PC-3 (cell line): ENCODE measurements at regions of chr2 and their contacts with region 1.

Region 1: GRCh38 chr2:165778653-165779451 is 15.2 kb downstream of the GALNT3 start:
- DNase-seq: peak; percentile 65
- ATAC-seq: peak; percentile 6
- H3K4me3 ChIP-seq: peak overlapping the region; percentile 2; the same call in 1 of the 2 replicates
- H3K27ac ChIP-seq: peak overlapping the region; percentile 78
- H3K4me1 ChIP-seq: peaks cover 37% of the 10 kb centered on the region
- H3K27me3 ChIP-seq: no peaks in the 10 kb centered on the region
- CTCF ChIP-seq: peak; percentile 63

Region 2: GRCh38 chr2:165401285-165401852 is 377.5 kb before region 1 on chr2:
- CTCF ChIA-PET with region 1: no interaction called
- POLR2A ChIA-PET with region 1: no interaction called
- intact Hi-C with region 1: loop called (anchors 1 kb)
- DNase-seq: peak; percentile 92
- ATAC-seq: peak; percentile 23
- H3K4me3 ChIP-seq: no peak overlapping the region
- H3K27ac ChIP-seq: no peak overlapping the region
- H3K4me1 ChIP-seq: peaks cover 23% of the 10 kb centered on the region
- H3K27me3 ChIP-seq: no peaks in the 10 kb centered on the region
- CTCF ChIP-seq: peak; percentile 97

Region 3: GRCh38 chr2:165499131-165499530 is 279.7 kb before region 1 on chr2:
- CTCF ChIA-PET with region 1: no interaction called
- POLR2A ChIA-PET with region 1: no interaction called
- intact Hi-C with region 1: no loop called
- DNase-seq: no peak
- ATAC-seq: no peak
- H3K4me3 ChIP-seq: no peak overlapping the region
- H3K27ac ChIP-seq: no peak overlapping the region
- H3K4me1 ChIP-seq: no peaks in the 10 kb centered on the region
- H3K27me3 ChIP-seq: no peaks in the 10 kb centered on the region
- CTCF ChIP-seq: no peak

Region 4: DNA sequence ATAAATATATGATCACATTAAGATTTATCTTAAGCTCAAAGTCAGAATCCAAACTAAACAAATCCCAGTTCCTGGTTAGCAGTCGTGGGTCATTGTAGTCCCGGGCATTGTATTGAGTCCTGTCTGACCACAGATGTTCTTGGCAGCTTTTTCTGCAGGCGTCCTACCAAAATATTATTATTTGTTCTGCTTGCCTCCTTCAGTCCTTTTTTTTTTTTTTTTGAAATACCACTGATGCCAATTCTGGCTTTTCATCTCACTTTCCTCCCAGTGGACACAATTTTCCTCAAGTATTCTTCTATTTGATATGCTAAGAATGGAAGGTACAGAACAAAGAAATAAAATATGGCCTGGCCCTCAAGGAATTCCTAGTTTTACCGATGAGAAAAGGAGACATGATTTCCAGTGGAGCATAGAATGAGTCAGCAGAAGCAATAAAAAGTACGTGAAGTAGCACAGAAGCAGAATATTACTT is 157.7 kb before region 1 on chr2:
- CTCF ChIA-PET with region 1: no interaction called
- POLR2A ChIA-PET with region 1: no interaction called
- intact Hi-C with region 1: loop called (anchors 5 kb)
- DNase-seq: peak; percentile 77
- ATAC-seq: peak; percentile 91
- H3K4me3 ChIP-seq: peak overlapping the region; percentile 22; the same call in 1 of the 2 replicates
- H3K27ac ChIP-seq: peak overlapping the region; percentile 48
- H3K4me1 ChIP-seq: peaks cover 14% of the 10 kb centered on the region
- H3K27me3 ChIP-seq: no peaks in the 10 kb centered on the region
- CTCF ChIP-seq: no peak

Region 5: GRCh38 chr2:165681841-165682240 is 97.0 kb before region 1 on chr2:
- CTCF ChIA-PET with region 1: no interaction called
- POLR2A ChIA-PET with region 1: no interaction called
- intact Hi-C with region 1: no loop called
- DNase-seq: no peak
- ATAC-seq: no peak
- H3K4me3 ChIP-seq: no peak overlapping the region
- H3K27ac ChIP-seq: no peak overlapping the region
- H3K4me1 ChIP-seq: no peaks in the 10 kb centered on the region
- H3K27me3 ChIP-seq: no peaks in the 10 kb centered on the region
- CTCF ChIP-seq: no peak

Region 6: DNA sequence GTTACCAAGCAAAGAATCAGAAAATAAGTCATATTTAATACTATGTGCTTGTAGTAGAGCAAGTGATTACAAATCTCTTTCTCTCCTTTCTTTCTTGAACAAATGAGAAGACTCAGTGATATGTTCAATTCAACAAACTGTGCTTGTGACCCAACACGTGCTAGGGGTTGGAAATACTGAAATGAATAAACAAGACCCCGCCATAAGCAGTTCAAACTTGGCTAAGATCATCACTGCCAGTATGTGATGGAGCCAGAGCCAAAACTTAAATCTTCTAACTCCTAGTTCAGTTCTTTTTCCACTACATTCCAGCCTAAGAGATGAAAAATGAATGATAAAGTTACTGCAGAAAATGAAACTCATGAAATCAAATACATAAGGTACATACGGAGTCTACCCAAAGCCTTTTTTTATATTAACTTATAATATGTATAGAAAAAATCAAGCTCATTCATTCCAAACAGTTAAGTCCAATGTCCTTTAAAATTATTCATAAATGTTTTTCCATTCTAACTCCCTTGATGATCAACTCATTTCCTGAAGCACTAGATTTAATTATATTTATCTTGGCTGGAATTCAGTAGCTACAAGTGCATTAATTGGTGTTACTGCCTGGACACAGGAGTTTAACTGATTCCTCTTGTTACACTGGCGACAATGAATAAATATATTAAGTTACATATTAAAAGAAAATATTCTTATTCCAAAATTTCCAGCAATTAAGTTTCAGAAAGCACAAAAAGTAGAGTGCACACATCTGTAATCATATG is 20.8 kb before region 1 on chr2:
- CTCF ChIA-PET with region 1: no interaction called
- POLR2A ChIA-PET with region 1: no interaction called
- intact Hi-C with region 1: loop called (anchors 1 kb)
- DNase-seq: peak; percentile 28
- ATAC-seq: peak; percentile 85
- H3K4me3 ChIP-seq: no peak overlapping the region
- H3K27ac ChIP-seq: no peak overlapping the region
- H3K4me1 ChIP-seq: no peaks in the 10 kb centered on the region
- H3K27me3 ChIP-seq: no peaks in the 10 kb centered on the region
- CTCF ChIP-seq: no peak

Region 7: DNA sequence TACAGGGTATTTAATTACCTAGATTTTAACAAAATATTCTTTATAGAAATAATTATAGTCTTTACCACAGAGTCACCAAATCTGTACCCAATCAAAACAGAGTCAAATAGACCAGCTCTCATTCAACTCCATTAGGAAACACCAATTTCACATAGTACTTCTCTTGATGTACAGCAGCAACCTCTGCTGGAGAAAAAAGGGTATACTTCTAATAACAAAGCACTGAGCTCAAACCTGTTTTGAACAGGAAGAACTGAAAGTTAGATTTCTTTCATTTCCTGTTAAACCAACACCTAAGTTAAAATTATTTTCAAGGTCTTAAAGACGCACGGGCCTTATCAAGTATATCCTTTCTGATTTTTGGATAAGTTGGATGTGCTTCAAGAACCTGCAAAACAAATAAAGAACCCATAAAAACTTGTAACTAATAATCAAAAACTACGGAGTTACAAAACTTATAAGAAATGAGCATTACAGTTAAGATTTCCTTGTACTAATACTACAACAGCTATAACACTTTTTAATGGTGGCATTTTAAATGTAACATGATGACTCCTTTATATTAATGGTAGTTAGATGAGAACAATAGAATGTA is 95.7 kb after region 1 on chr2:
- CTCF ChIA-PET with region 1: interaction called, 13 read pairs
- POLR2A ChIA-PET with region 1: no interaction called
- intact Hi-C with region 1: loop called (anchors 1 kb)
- DNase-seq: peak; percentile 93
- ATAC-seq: peak; percentile 94
- H3K4me3 ChIP-seq: peak overlapping the region; percentile 31
- H3K27ac ChIP-seq: no peak overlapping the region
- H3K4me1 ChIP-seq: peaks cover 10% of the 10 kb centered on the region
- H3K27me3 ChIP-seq: no peaks in the 10 kb centered on the region
- CTCF ChIP-seq: peak; percentile 96

Region 8: GRCh38 chr2:166246901-166247300 is 468.0 kb after region 1 on chr2:
- CTCF ChIA-PET with region 1: no interaction called
- POLR2A ChIA-PET with region 1: no interaction called
- intact Hi-C with region 1: no loop called
- DNase-seq: no peak
- ATAC-seq: peak; percentile 44; the same call in 1 of the 2 replicates
- H3K4me3 ChIP-seq: no peak overlapping the region
- H3K27ac ChIP-seq: no peak overlapping the region
- H3K4me1 ChIP-seq: no peaks in the 10 kb centered on the region
- H3K27me3 ChIP-seq: no peaks in the 10 kb centered on the region
- CTCF ChIP-seq: no peak